Endothelial cell of umbilical vein (primary cell): ENCODE measurements at regions of chr22 and their contacts with region 1.

Region 1: DNA sequence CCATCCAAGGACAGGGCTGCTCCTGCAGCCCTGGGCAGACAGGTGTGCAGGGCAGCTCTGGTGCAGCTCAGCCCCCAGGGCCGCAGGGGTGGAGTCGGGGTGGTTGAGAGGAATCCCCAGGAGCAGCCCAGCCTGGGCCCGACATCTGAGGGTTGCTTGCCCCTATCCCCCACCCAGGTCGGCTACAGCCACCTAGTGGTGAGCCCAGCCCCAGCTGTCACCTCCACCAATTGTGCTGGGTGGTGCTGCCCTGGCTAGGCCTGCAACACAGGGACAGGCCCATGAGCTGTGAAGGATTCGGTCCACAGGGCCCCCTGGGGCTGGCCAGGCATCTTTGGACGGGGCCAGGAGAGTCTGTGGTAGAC is 29.6 kb downstream of the RTN4R start:
- DNase-seq: peak; percentile 30
- H3K4me3 ChIP-seq: no peak overlapping the region
- H3K27ac ChIP-seq: no peak overlapping the region
- H3K4me1 ChIP-seq: peaks cover 11% of the 10 kb centered on the region
- H3K27me3 ChIP-seq: no peaks in the 10 kb centered on the region
- CTCF ChIP-seq: peak; percentile 51 to 66
- POLR2A ChIP-seq: no peak

Region 2: GRCh38 chr22:20174785-20175596 is 63.5 kb before region 1 on chr22:
- CTCF ChIA-PET with region 1: interaction called, 19 read pairs
- POLR2A ChIA-PET with region 1: no interaction called
- dilution Hi-C with region 1: no loop called
- intact Hi-C with region 1: no loop called
- DNase-seq: no peak
- H3K4me3 ChIP-seq: no peak overlapping the region
- H3K27ac ChIP-seq: no peak overlapping the region
- H3K4me1 ChIP-seq: no peaks in the 10 kb centered on the region
- H3K27me3 ChIP-seq: no peaks in the 10 kb centered on the region
- CTCF ChIP-seq: no peak
- POLR2A ChIP-seq: no peak

Region 3: DNA sequence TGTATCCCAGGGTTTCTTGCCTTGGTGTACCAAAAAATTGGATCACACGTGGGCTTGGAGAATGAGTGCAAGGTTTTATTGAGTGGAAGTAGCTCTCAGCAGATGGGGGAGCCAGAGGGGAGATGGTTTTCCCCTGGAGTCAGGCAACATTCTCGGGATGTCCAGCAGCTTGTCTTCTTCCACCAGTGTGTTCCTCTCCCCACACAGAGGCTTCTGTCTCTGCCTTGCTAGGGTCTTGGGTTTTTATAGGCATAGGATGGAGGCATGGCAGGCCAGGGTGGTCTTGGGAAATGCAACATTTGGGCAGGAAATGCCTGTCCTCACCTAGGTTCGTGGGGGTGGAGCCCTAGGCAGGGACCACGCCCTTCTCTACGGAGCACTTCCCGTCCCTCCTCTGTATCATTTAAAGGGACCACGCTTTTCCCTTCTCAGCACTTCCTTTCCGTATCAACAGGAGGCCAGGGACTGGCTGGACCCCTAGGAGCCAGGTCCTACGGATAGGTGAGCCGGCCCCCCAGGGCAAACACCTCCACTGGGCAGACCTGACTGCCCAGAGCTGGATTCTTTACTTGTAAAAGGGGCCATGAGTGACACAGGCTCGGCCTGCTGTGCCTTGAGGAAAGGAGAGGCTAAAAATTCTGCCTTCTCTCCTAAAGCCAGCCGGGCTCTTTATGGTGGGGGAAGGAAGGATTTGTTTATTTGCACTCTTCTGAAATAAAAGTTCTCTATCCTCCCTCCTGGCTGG is 32.4 kb before region 1 on chr22:
- CTCF ChIA-PET with region 1: interaction called, 4 read pairs
- POLR2A ChIA-PET with region 1: no interaction called
- dilution Hi-C with region 1: no loop called
- intact Hi-C with region 1: loop called (anchors 1 kb)
- DNase-seq: peak; percentile 71
- H3K4me3 ChIP-seq: peak overlapping the region; percentile 59 to 75 (median 70)
- H3K27ac ChIP-seq: peak overlapping the region; percentile 62
- H3K4me1 ChIP-seq: peaks cover 35% of the 10 kb centered on the region
- H3K27me3 ChIP-seq: no peaks in the 10 kb centered on the region
- CTCF ChIP-seq: no peak
- POLR2A ChIP-seq: peak; percentile 75

Region 4: DNA sequence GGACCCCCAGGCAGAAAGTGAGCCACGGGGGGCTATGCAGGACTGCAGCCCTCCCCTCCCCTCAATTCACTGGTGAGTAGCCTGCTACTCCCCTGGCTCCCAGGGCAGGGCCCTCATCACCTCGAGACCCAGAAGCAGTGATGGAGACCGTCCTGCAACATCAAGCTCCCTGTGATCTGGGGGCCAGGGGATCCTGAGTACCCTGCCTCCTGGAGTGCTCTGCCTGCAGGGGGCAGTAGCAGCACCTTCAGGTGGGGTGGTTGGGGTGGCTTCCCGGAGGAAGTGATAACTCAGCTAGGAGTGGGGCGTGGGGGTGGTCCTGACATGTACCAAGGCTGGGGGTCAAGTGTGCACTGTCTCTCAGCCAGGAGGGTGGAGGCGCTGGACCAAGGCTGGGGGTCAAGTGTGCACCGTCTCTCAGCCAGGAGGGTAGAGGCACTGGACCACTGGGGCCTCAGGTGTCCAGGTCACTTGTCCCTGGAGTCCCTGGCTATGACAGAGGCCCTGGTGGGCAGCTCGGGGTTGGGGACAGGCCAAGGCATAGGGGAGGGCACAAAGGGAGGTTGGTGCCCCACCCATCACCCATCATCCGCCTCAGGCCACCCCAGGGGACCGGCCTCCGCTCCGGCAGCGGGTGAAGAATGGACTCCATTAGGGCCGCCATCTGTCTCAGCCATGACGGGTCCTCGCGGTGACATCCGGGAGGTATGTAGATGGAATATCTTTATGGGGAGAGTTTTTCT is 20.2 kb after region 1 on chr22:
- CTCF ChIA-PET with region 1: interaction called, 11 read pairs
- POLR2A ChIA-PET with region 1: no interaction called
- dilution Hi-C with region 1: no loop called
- intact Hi-C with region 1: no loop called
- DNase-seq: no peak
- H3K4me3 ChIP-seq: no peak overlapping the region
- H3K27ac ChIP-seq: no peak overlapping the region
- H3K4me1 ChIP-seq: no peaks in the 10 kb centered on the region
- H3K27me3 ChIP-seq: no peaks in the 10 kb centered on the region
- CTCF ChIP-seq: peak; percentile 28 to 45
- POLR2A ChIP-seq: no peak